HEK293 (cell line): ENCODE measurements at regions of chr2 and their contacts with region 1.

Region 1: DNA sequence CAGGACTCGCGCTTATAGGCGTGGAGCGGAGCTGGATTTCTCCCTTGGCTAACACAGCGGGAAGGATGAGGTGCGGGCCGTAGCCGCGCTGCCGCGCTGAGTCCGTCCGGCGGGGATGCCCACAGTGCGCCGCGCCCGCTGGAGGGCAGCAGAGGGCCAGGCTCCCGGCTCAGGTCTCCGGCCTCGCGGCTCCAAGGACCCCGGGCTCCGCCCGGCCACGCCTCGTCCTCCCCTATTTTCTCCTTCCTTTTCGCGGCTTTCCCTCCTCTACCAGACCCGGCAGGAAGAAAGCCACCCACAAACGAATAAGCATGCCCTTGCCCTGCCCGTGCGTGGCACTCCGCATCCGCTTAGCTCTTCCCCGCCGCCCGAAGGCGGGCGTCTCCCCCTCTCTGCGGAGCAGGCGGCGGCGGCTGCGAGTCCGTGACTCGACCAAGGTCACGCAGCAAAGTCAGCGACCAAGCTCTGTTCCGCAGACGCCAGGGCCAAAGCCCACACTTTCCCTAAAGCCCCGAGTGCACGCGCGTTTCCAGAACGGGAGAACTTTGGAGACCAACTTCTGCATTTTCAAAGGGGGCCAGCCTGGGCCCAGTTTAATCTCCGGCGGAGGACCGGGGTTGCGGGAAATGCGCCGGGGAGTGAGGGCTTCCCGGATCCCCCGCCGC is 48.6 kb downstream of the KCNIP3 start:
- H3K4me3 ChIP-seq: peak overlapping the region; percentile 46
- H3K27ac ChIP-seq: peak overlapping the region; percentile 67; the same call in 1 of the 2 replicates
- H3K4me1 ChIP-seq: no peaks in the 10 kb centered on the region; the same call in 1 of the 2 replicates
- CTCF ChIP-seq: peak; percentile 93

Region 2: DNA sequence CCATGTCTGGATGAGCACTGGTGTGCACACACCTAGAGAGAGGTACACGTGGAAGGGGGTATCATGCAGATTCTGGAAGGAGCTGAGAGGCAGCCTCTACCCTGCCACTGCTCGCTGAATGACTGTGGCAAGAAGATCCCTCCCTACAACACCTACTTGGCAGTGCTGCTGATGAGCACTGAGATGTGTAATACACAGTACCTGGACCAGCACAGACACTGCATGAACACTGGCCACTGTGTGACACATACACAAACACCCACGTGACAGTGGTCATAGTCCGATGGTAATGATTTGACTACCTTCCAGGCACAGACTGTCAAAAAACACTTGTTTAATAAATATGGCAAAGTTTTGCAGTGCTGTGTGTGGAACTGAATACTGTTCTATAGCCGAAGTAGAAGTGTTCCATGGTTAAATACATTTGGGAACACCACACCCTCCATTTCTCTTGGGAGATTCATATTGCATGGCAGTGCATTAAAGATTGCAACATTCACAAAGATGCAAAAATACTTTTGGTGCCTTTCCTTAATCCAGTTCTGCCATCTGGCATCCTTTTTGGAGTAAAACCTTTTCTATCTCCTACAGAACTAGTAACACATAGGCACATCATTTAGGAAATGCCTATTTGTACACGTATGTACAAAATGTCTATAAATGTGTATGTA is 253.7 kb before region 1 on chr2:
- CTCF ChIA-PET with region 1: no interaction called
- POLR2A ChIA-PET with region 1: no interaction called
- H3K4me3 ChIP-seq: no peak overlapping the region
- H3K27ac ChIP-seq: no peak overlapping the region
- H3K4me1 ChIP-seq: no peaks in the 10 kb centered on the region
- CTCF ChIP-seq: no peak

Region 3: GRCh38 chr2:95328358-95329125 is 17.2 kb before region 1 on chr2:
- CTCF ChIA-PET with region 1: interaction called, 34 read pairs
- POLR2A ChIA-PET with region 1: interaction called, 3 read pairs
- H3K4me3 ChIP-seq: no peak overlapping the region
- H3K27ac ChIP-seq: no peak overlapping the region
- H3K4me1 ChIP-seq: peaks cover 8% of the 10 kb centered on the region
- CTCF ChIP-seq: no peak

Region 4: GRCh38 chr2:95333888-95334338 is 11.8 kb before region 1 on chr2:
- CTCF ChIA-PET with region 1: interaction called, 34 read pairs
- POLR2A ChIA-PET with region 1: interaction called, 3 read pairs
- H3K4me3 ChIP-seq: no peak overlapping the region
- H3K27ac ChIP-seq: peak overlapping the region; percentile 60; the same call in 1 of the 2 replicates
- H3K4me1 ChIP-seq: peaks cover 14% of the 10 kb centered on the region
- CTCF ChIP-seq: no peak